Activated CD4-positive, alpha-beta memory T cell treated with anti-CD3 and anti-CD28 coated beads for 36 hours (primary cell): ENCODE measurements at regions of chr12 and their contacts with region 1.

Region 1: DNA sequence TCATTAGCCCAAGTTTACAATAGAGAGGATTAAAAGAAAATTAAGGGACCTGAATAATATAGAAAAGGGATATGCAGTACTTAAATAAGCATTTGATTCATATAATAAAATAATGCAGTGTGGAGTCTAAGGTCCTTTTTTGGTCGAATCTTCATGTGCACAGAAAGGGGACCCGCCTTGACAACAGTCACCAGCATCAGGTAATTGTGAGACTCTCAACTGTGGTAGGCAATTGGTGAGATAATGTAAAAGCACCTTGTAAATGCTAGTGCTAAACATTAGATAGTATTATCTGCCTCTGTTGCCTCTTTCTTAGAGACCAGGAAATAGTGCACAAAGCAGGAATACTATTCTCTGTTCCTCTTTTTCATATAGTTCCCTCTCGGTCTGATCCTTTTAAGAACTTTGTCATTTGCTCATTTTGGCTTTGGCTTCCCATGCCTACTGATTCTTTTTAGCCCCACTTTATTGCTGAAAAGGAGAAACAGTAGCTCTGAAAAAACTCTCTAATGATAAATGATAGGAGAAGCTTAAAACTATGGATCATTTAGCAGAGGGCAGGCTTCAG is 17.5 kb downstream of the CHPT1 start:
- DNase-seq: no peak
- H3K4me3 Mint-ChIP-seq: no peak overlapping the region
- H3K27ac Mint-ChIP-seq: no peak overlapping the region
- H3K4me1 Mint-ChIP-seq: peaks cover 9% of the 10 kb centered on the region
- H3K27me3 Mint-ChIP-seq: no peaks in the 10 kb centered on the region

Region 2: DNA sequence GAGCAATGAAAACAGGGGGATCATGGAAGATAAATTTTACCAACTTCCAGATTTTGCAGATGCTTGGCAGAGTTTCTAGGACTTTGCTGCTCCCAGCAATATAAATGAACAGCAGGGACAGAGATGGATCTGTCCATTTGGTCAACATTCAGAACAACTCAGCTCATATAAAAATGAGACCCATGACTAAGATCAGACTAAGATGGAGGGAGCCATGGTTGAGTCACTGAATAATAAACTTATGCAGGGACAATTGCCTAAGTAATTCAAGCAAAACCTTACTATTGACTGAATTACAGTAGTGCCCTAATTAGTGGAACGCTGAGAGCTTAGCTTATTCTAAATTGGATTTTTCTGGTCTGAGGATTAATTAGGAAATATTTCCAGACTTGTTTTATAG is 710.1 kb before region 1 on chr12:
- CTCF ChIA-PET with region 1: no interaction called
- POLR2A ChIA-PET with region 1: no interaction called
- intact Hi-C with region 1: no loop called
- DNase-seq: no peak
- H3K4me3 Mint-ChIP-seq: no peak overlapping the region
- H3K27ac Mint-ChIP-seq: no peak overlapping the region
- H3K4me1 Mint-ChIP-seq: no peaks in the 10 kb centered on the region
- H3K27me3 Mint-ChIP-seq: no peaks in the 10 kb centered on the region

Region 3: GRCh38 chr12:101670007-101670687 is 44.8 kb before region 1 on chr12:
- CTCF ChIA-PET with region 1: no interaction called
- POLR2A ChIA-PET with region 1: no interaction called
- intact Hi-C with region 1: loop called (anchors 5 kb)
- DNase-seq: peak; percentile 64
- H3K4me3 Mint-ChIP-seq: no peak overlapping the region
- H3K27ac Mint-ChIP-seq: no peak overlapping the region
- H3K4me1 Mint-ChIP-seq: peaks cover 17% of the 10 kb centered on the region
- H3K27me3 Mint-ChIP-seq: peaks cover 9% of the 10 kb centered on the region